ENCODE measurements at regions of chr4 and their contacts with region 1.

Region 1: GRCh38 chr4:40309250-40309774 is 25.8 kb upstream of the CHRNA9 start:
- DNase-seq: peak; percentile 86
- H3K4me3 ChIP-seq: no peak overlapping the region
- H3K27ac ChIP-seq: no peak overlapping the region
- H3K4me1 ChIP-seq: peaks cover 11% of the 10 kb centered on the region
- H3K27me3 ChIP-seq: no peaks in the 10 kb centered on the region
- CTCF ChIP-seq: peak; percentile 90 to 95
- POLR2A ChIP-seq: no peak

Region 2: DNA sequence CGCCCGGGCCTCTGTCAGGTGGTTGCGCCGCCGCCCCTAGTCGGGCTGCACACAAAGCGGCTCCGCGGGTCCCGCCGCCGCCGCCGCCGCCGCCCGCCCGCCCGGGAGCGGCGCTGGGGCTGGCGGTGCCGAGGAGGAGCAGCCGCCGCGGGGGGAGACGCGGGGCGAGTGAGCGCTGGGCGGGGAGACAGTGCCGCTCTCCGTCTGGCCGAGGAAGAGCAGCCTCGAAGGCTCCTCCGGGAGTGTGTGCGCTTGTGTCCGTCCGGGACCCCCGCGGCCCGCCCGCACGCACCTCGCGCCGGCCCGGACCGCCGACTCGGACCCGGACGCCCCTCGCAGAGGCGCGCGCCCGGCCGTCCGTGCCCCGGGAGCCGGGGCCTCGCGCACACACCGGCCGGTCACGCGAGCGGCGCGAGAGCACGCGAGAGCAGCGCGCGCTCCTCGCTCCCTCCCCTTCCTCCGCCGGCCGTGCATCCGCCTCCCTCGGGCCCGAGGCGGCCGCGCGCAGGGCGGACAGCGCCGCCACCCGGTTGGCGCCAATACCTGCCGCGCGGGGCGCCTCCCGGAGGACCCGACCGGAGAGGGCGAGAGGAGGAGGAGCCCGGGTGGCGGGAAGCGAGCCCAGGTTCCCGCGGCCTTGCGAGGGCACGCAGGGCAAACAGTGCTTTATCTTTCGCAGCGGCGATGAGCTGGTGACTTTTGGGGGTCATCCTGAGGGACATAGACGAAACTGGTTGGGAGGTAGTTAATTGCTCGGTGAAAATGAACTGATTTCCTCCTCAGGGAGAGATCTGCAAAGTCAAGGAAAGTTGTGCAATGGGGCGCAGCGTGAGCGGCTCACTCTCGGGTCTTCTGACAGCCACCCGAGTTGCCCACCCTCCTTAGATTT is 331.6 kb before region 1 on chr4 and contains the start of gene PDS5A:
- CTCF ChIA-PET with region 1: interaction called, 4 read pairs
- POLR2A ChIA-PET with region 1: no interaction called
- dilution Hi-C with region 1: no loop called
- intact Hi-C with region 1: loop called (anchors 2 kb)
- DNase-seq: peak; percentile 88
- H3K4me3 ChIP-seq: peak within 1 kb of the TSS; percentile 62 to 83 (median 67)
- H3K27ac ChIP-seq: peak within 1 kb of the TSS; percentile 74
- H3K4me1 ChIP-seq: peaks cover 15% of the 10 kb centered on the region
- H3K27me3 ChIP-seq: no peaks in the 10 kb centered on the region
- CTCF ChIP-seq: peak; percentile 77 to 95
- POLR2A ChIP-seq: peak; percentile 78
- total RNA-seq, gene PDS5A: 77.8 and 80.8 TPM in 2 replicates

Region 3: GRCh38 chr4:40149960-40150385 is 159.3 kb before region 1 on chr4:
- CTCF ChIA-PET with region 1: interaction called, 40 read pairs
- POLR2A ChIA-PET with region 1: no interaction called
- dilution Hi-C with region 1: no loop called
- intact Hi-C with region 1: loop called (anchors 1 kb)
- DNase-seq: peak; percentile 66
- H3K4me3 ChIP-seq: no peak overlapping the region
- H3K27ac ChIP-seq: no peak overlapping the region
- H3K4me1 ChIP-seq: no peaks in the 10 kb centered on the region
- H3K27me3 ChIP-seq: no peaks in the 10 kb centered on the region
- CTCF ChIP-seq: peak; percentile 66 to 70
- POLR2A ChIP-seq: no peak

Region 4: DNA sequence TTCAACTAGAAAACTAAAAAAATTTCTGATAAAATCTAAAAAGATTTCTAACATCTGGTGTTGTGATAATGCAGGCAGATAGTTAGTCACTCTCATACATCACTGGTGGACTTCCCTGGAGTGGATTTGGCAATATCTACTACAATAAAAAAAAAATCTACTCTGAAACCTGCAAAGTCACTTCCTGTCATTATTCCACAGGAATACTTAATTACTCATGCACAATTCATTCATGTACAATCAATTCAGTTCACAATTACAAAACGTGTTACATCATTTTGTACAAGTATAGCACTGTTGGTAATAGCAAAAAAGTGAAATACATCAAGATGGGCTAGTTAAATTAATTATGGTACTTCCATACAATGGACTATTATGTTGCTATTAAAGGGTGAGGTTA is 129.0 kb before region 1 on chr4:
- CTCF ChIA-PET with region 1: no interaction called
- POLR2A ChIA-PET with region 1: no interaction called
- dilution Hi-C with region 1: no loop called
- intact Hi-C with region 1: loop called (anchors 1 kb)
- DNase-seq: peak; percentile 85
- H3K4me3 ChIP-seq: no peak overlapping the region
- H3K27ac ChIP-seq: peak overlapping the region; percentile 70
- H3K4me1 ChIP-seq: peaks cover 11% of the 10 kb centered on the region
- H3K27me3 ChIP-seq: no peaks in the 10 kb centered on the region
- CTCF ChIP-seq: no peak
- POLR2A ChIP-seq: no peak

Region 5: DNA sequence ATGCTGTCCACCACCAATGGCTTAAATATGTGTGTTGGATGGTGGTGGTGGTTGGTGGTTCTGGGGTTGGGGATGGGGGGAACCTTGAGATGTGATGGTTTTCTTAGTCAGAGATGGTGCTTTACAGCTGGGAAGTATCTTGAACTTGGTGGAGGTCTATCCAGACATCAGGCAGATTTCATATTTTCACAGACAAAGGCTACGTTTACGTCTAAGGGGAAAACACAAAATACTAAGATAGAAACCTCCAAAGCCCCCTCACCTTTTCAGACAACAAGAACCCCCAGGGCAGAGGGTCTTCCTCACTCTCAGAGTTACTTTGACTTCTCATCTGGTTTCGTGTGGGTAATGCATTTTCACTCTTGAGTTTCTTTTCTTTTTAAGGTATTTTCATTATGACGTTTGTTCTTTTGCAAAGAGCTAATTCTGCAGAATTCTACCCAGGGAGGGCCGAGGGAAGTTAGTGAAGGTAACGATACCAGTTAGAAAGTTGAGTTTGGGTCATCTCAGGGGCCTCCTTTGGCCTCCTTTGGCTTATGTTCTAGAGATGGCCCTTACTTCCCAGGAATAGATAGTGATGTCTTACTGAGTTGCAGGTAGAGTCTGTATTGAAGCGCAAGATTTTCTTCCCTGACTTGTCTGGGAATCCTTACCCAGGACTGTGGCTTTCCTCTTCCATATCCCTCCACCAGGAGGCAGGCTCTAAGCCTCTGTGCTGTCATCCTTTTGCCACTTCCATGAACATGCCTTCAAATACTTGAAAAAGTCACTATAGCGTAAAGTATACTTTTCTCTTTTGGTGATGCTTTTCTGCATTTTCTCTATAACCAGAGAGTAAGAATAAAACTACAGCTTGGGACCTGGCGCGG is 80.6 kb before region 1 on chr4:
- CTCF ChIA-PET with region 1: interaction called, 8 read pairs
- POLR2A ChIA-PET with region 1: no interaction called
- dilution Hi-C with region 1: no loop called
- intact Hi-C with region 1: loop called (anchors 1 kb)
- DNase-seq: no peak
- H3K4me3 ChIP-seq: no peak overlapping the region
- H3K27ac ChIP-seq: no peak overlapping the region
- H3K4me1 ChIP-seq: no peaks in the 10 kb centered on the region
- H3K27me3 ChIP-seq: no peaks in the 10 kb centered on the region
- CTCF ChIP-seq: peak; percentile 30 to 34
- POLR2A ChIP-seq: no peak

Region 6: GRCh38 chr4:40255393-40256281 is 53.7 kb before region 1 on chr4:
- CTCF ChIA-PET with region 1: interaction called, 6 read pairs
- POLR2A ChIA-PET with region 1: no interaction called
- dilution Hi-C with region 1: no loop called
- intact Hi-C with region 1: loop called (anchors 2 kb)
- DNase-seq: peak; percentile 96
- H3K4me3 ChIP-seq: peak overlapping the region in 1 of 3 experiments; percentile 9
- H3K27ac ChIP-seq: peak overlapping the region; percentile 67
- H3K4me1 ChIP-seq: peaks cover 29% of the 10 kb centered on the region
- H3K27me3 ChIP-seq: no peaks in the 10 kb centered on the region
- CTCF ChIP-seq: no peak
- POLR2A ChIP-seq: no peak

Region 7: DNA sequence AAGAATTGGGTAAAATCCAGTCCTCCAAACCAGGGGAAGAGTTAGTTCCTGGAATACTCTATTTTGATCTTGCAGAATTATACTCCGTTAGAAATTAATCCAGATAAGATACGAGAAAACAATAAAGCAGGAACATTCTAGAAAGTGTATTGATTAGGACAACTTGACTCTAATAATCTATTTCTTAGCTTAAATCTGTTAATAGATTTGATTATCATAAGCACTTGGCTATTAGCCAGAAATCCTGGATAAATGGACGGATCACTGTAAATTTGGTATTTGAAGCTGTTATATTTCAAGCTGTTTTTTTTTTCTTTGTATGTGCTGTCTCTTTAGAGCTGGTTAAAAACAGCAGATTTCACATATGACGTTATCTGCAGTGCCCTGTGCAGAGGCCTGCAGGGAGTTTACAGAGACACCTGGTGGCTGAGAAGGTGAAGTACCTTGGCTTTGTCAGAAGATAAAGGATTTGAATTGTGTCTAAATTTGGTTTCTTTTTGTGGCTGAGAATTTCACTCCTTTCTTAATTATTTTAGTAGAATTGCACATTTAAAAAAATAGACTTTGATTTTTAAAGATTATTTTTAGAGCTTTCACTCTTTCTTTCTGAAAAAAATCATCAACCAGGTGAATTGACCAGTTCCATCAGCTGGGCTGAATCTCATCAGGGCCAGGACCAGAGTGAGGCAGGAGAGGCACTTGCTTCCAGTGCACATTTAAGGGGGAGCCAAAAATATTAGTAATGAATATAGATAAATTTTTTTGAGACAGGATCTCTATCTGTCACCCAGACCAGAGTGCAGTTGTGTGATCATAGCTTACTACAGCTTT is 16.1 kb after region 1 on chr4:
- CTCF ChIA-PET with region 1: interaction called, 72 read pairs
- POLR2A ChIA-PET with region 1: no interaction called
- dilution Hi-C with region 1: no loop called
- intact Hi-C with region 1: no loop called
- DNase-seq: peak; percentile 73
- H3K4me3 ChIP-seq: no peak overlapping the region
- H3K27ac ChIP-seq: no peak overlapping the region
- H3K4me1 ChIP-seq: no peaks in the 10 kb centered on the region
- H3K27me3 ChIP-seq: peaks cover 4 to 5% of the 10 kb centered on the region in 2 experiments
- CTCF ChIP-seq: peak; percentile 74 to 80
- POLR2A ChIP-seq: no peak